ENCODE measurements at regions of chr14 and their contacts with region 1.

Region 1: GRCh38 chr14:24332268-24332993 is 2.4 kb downstream of the ADCY4 start:
- DNase-seq: peak; percentile 93
- ATAC-seq: peak; percentile 87
- H3K4me3 Mint-ChIP-seq: peak overlapping the region; percentile 68
- H3K27ac Mint-ChIP-seq: no peak overlapping the region
- H3K4me1 Mint-ChIP-seq: peaks cover 43% of the 10 kb centered on the region
- H3K27me3 Mint-ChIP-seq: peaks cover 29% of the 10 kb centered on the region
- CTCF ChIP-seq: peak; percentile 82

Region 2: DNA sequence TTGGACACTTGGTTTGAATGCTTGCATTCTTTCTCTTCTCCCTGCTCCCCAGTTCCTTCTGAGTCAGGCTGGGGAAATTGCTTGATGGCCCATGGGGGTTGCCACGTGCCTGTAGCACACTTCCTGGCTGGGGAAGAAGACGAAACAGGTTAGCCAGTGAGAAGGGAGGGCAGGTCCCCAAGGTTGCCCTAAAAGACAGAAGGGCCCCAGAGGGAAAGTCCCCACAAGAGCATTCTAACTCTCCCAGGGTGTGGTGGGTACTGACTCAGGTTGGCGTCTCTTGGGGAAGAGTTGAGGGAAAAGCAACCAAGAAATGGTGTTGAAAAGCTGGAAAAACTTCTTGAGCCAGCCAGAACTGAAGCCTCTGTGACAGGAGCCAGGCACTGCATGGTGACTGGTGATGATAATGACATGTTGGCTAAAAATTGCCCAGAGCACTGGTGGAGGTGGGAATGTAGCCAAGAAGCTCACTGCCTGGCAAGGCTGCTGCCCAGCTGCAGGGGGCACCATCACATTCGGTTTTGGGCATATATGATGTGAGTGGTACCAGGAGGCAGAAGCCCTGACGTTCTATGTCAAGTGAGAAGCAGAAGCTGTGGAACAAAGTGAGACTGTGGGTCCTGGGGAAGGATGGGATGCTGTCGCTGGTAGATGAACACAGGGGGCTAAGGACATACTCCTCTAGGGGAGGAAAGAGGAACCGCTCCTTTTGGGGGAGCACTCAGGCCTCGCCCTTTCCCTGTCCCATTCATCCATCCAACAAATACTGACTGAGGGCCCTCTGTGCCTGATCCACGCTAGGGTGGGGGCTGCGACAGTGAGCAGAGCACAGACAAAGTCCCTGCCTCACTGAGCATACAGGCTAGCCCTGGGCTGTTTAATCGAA is 52.9 kb before region 1 on chr14:
- CTCF ChIA-PET with region 1: interaction called, 12 read pairs
- POLR2A ChIA-PET with region 1: no interaction called
- intact Hi-C with region 1: no loop called
- DNase-seq: peak; percentile 76
- ATAC-seq: peak; percentile 88
- H3K4me3 Mint-ChIP-seq: no peak overlapping the region
- H3K27ac Mint-ChIP-seq: peak overlapping the region; percentile 77
- H3K4me1 Mint-ChIP-seq: peaks cover 44% of the 10 kb centered on the region
- H3K27me3 Mint-ChIP-seq: no peaks in the 10 kb centered on the region
- CTCF ChIP-seq: peak; percentile 53

Region 3: GRCh38 chr14:24310646-24311604 is 21.5 kb before region 1 on chr14 and contains the start of gene LTB4R:
- CTCF ChIA-PET with region 1: interaction called, 138 read pairs
- POLR2A ChIA-PET with region 1: interaction called, 4 read pairs
- intact Hi-C with region 1: no loop called
- DNase-seq: peak; percentile 74
- ATAC-seq: peak; percentile 87
- H3K4me3 Mint-ChIP-seq: peak within 1 kb of the TSS; percentile 58
- H3K27ac Mint-ChIP-seq: peak within 1 kb of the TSS; percentile 81
- H3K4me1 Mint-ChIP-seq: peaks cover 66% of the 10 kb centered on the region
- H3K27me3 Mint-ChIP-seq: no peaks in the 10 kb centered on the region
- CTCF ChIP-seq: peak; percentile 63
- total RNA-seq, gene LTB4R: 11.6 to 11.7 TPM

Region 4: GRCh38 chr14:24351517-24351916 is 19.1 kb after region 1 on chr14:
- CTCF ChIA-PET with region 1: interaction called, 70 read pairs
- POLR2A ChIA-PET with region 1: no interaction called
- intact Hi-C with region 1: no loop called
- DNase-seq: no peak
- ATAC-seq: no peak
- H3K4me3 Mint-ChIP-seq: no peak overlapping the region
- H3K27ac Mint-ChIP-seq: no peak overlapping the region
- H3K4me1 Mint-ChIP-seq: peaks cover 3% of the 10 kb centered on the region
- H3K27me3 Mint-ChIP-seq: peaks cover 35% of the 10 kb centered on the region
- CTCF ChIP-seq: no peak

Region 5: GRCh38 chr14:24398653-24399446 is 66.4 kb after region 1 on chr14 and contains the start of gene NYNRIN:
- CTCF ChIA-PET with region 1: interaction called, 14 read pairs
- POLR2A ChIA-PET with region 1: no interaction called
- intact Hi-C with region 1: no loop called
- DNase-seq: peak; percentile 38
- ATAC-seq: peak; percentile 88
- H3K4me3 Mint-ChIP-seq: peak within 1 kb of the TSS; percentile 25
- H3K27ac Mint-ChIP-seq: no peak within 1 kb of the TSS
- H3K4me1 Mint-ChIP-seq: peaks cover 3% of the 10 kb centered on the region
- H3K27me3 Mint-ChIP-seq: peaks cover 9% of the 10 kb centered on the region
- CTCF ChIP-seq: no peak
- total RNA-seq, gene NYNRIN: 0.05 to 0.27 TPM

Region 6: GRCh38 chr14:24442273-24443052 is 110.0 kb after region 1 on chr14 and contains the start of gene SDR39U1:
- CTCF ChIA-PET with region 1: interaction called, 155 read pairs
- POLR2A ChIA-PET with region 1: interaction called, 12 read pairs
- intact Hi-C with region 1: no loop called
- DNase-seq: peak; percentile 98
- ATAC-seq: peak; percentile 91
- H3K4me3 Mint-ChIP-seq: peak within 1 kb of the TSS; percentile 86
- H3K27ac Mint-ChIP-seq: peak within 1 kb of the TSS; percentile 98
- H3K4me1 Mint-ChIP-seq: peaks cover 40% of the 10 kb centered on the region
- H3K27me3 Mint-ChIP-seq: no peaks in the 10 kb centered on the region
- CTCF ChIP-seq: no peak
- total RNA-seq, gene SDR39U1: 43.6 to 55.5 TPM